Activated CD4-positive, alpha-beta T cell treated with anti-CD3 and anti-CD28 coated beads for 36 hours (primary cell): ENCODE measurements at regions of chr2 and their contacts with region 1.

Region 1: DNA sequence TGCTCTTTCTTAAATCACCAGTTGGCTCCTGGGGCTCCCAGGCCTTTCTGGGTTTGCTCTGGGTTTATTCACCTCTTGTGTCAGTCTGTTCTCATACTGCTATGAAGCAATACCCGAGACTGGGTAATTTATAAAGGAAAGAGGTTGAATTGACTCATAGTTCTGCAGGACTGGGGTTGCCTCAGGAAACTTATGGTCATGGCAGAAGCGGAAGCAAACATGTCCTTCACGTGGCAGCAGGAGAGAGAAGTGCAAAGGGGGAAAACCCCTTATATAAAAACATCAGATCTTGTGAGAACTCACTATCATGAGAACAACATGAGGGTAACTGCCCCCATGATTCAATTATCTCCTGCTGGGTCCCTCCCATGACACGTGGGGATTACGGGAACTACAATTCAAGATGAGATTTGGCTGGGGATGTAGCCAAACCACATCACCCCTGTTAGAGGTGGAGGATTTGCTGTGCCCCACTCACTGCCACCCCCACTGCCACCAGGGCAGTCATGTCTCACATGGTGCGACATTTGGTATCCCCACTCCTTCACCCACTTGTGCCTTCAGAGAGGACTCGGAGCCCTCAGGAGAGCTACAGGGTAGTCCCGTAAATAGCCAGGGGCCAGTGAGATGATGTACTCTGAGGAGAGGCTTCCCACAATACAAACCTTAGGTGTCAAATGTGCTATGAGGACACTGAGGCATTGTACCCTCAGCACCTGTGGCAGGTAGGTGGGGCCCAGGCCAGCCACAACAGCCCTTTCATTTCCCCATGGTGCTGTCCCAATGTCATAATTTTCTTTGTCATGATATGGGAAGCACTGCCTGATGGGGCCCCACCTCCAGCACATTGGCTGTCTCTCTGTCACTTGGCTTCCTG is 35.7 kb downstream of the CDC42EP3 start:
- DNase-seq: peak; percentile 85
- ATAC-seq: peak; percentile 85
- H3K4me3 Mint-ChIP-seq: peak overlapping the region; percentile 33
- H3K27ac Mint-ChIP-seq: peak overlapping the region; percentile 83
- H3K4me1 Mint-ChIP-seq: peaks cover 65% of the 10 kb centered on the region
- H3K27me3 Mint-ChIP-seq: no peaks in the 10 kb centered on the region

Region 2: DNA sequence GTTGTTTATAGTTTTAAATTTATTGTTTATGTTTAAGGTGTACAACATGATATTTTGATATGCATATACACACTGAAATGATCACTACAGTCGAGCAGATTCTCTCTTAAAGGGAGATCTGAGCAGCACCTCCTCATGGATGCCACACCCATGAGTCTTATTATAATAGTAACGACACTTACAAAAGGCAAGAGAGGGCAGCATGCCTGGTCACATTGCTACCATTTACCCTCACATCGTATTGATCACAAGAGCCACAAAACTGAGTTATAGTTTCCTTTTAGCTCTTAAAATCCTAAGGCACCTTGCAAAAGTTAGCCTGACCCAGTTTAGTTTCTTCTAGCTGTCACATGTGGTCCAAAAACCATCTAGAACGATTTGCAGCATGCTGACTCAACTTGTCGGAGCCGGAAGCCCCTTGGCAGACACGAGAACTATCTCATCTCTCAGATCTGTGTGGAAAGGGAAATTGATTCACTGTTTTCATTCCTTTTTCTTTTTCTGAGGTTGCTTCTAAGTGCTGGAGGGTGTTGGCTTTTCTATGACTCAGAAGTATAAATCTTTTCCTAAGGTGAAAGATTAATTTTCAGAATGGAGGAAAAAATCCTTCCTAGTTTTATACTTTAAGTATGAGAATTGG is 49.6 kb before region 1 on chr2:
- CTCF ChIA-PET with region 1: no interaction called
- POLR2A ChIA-PET with region 1: no interaction called
- intact Hi-C with region 1: loop called (anchors 1 kb)
- DNase-seq: peak; percentile 83
- ATAC-seq: peak; percentile 85
- H3K4me3 Mint-ChIP-seq: peak overlapping the region; percentile 22
- H3K27ac Mint-ChIP-seq: peak overlapping the region; percentile 52
- H3K4me1 Mint-ChIP-seq: peaks cover 90% of the 10 kb centered on the region
- H3K27me3 Mint-ChIP-seq: no peaks in the 10 kb centered on the region

Region 3: DNA sequence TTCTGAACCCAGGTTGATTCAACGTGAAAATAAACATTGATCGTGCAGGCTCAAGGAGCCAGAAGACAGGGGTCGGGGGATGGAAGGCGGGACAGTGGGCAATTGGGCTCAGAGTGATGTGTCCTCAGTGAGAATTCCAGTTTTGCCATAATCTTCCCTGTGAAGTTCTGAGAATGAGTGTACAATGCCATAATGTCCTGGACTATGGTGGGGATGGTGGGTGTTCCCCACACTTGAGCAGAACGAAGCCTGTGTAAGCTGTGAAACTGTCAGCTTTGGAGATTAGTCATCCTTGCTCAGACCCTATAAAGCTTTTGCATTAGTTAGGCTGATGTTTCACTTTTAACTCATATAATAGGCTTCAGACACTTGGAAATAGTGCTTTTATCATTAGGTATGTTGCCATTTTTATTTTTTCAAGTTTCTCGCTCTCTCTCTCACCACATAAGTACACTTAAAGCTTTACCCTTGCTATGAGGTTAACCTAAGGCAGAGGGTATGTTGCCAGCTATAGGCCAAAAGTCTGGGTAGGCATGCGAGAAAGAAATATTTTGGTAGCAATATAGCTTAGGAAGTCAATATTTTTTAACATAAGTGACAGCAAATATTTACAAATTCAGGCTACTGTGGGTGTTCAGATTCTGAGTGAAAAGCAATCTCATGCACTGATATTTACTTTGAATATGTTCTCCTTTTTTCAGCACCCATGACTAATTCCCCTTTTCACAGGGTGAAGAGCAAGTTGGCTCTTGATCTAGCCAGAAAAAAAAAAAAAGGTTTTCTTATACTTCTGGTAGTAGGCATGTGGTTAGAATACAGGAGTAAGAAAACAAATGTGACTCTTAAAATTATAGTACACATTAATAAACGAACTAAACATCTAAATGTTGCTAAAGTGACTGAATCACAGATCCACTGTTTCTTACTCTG is 11.5 kb before region 1 on chr2:
- CTCF ChIA-PET with region 1: interaction called, 8 read pairs
- POLR2A ChIA-PET with region 1: interaction called, 3 read pairs
- intact Hi-C with region 1: loop called (anchors 1 kb)
- DNase-seq: peak; percentile 45
- ATAC-seq: peak; percentile 78
- H3K4me3 Mint-ChIP-seq: peak overlapping the region; percentile 48
- H3K27ac Mint-ChIP-seq: peak overlapping the region; percentile 85
- H3K4me1 Mint-ChIP-seq: peaks cover 76% of the 10 kb centered on the region
- H3K27me3 Mint-ChIP-seq: no peaks in the 10 kb centered on the region

Region 4: DNA sequence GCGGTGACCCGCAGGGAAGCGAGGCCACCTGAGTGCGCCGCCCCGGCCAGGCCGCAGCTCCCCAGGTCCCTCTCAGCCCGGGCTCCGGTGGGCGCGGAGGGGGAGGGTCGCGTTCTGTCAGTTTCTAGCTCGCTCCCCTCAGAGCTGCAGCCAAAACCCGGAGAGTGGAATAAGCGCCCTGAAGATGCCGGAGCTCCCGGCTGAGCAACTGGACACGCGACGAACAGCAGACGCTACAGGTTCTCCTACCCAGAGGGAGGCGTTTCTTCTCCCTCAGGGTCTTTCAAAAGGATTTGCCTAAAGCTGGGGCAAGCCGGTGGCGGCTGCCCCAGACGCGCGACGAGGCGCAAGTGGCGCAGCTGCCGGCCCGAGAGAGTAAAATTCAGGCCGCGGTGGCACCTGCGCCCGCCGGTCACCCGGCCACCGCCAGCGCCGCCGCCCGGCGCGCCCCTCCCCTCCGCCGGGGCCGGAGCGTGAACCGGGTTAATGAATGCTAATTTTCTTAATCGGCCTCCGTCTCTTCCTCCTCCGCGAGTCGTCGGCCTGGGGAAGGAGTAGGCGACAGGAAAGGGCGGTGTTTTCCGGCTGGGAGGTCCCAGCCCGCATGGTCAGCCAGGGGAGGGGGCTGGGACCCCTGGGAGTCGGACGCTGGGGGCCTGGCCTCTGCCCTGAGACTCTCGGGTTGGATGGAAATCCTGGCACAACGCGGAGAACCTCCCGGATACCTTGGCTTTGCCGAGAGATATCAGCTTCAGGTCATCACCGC is 36.5 kb after region 1 on chr2:
- CTCF ChIA-PET with region 1: no interaction called
- POLR2A ChIA-PET with region 1: no interaction called
- intact Hi-C with region 1: loop called (anchors 1 to 2 kb)
- DNase-seq: peak; percentile 80
- ATAC-seq: peak; percentile 34
- H3K4me3 Mint-ChIP-seq: peak overlapping the region; percentile 83
- H3K27ac Mint-ChIP-seq: peak overlapping the region; percentile 83
- H3K4me1 Mint-ChIP-seq: peaks cover 40% of the 10 kb centered on the region
- H3K27me3 Mint-ChIP-seq: no peaks in the 10 kb centered on the region

Region 5: DNA sequence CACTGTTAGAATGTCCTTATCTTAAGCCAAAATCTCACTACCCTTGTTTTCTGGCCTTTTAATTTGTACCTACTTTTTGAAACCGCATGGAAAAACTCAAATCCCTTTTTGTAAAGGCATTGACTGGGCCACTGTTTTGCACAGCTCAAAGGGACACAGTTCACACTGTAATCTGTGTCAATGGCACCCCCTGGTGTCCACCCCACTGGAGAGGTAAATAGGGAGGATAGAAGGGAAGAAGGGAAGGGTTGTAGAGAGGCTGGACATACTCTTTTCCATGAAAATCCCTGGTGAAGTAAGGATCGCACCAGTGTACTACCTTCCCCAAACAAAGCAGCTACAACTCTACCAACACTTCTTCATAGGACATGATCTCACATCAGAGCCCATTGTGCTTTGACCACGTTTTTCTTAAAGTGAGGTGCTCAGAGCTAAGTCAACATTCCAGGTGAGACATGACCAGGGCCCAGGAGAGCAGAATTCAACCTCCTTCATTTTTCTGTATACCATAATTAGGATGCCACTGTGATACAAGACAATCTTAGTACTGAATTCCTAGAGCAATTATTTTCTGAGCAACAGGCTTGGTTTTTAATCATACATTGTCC is 197.0 kb after region 1 on chr2:
- CTCF ChIA-PET with region 1: no interaction called
- POLR2A ChIA-PET with region 1: no interaction called
- intact Hi-C with region 1: loop called in 1 of 2 experiments (anchors 5 kb)
- DNase-seq: peak; percentile 90
- ATAC-seq: peak; percentile 76
- H3K4me3 Mint-ChIP-seq: no peak overlapping the region
- H3K27ac Mint-ChIP-seq: peak overlapping the region; percentile 32
- H3K4me1 Mint-ChIP-seq: peaks cover 22% of the 10 kb centered on the region
- H3K27me3 Mint-ChIP-seq: no peaks in the 10 kb centered on the region